Activated T-helper 1 cell treated with anti-CD3 and anti-CD28 coated beads, Interleukin-12 subunit alpha, Interleukin-12 subunit beta, Interleukin-2, Interleukin-4 antibody, amounts not matched to agents 30 ng/mL and 10 ng/mL and 1 ng/mL, durations not matched to agents 14 hours and 24 hours and 36 hours (primary cell): ENCODE measurements at regions of chr4 and their contacts with region 1.

Region 1: GRCh38 chr4:83548151-83548905 is 12.4 kb downstream of the GPAT3 start:
- DNase-seq: peak; percentile 50
- H3K4me3 Mint-ChIP-seq: no peak overlapping the region
- H3K27ac Mint-ChIP-seq: peak overlapping the region; percentile 31
- H3K4me1 Mint-ChIP-seq: peaks cover 31% of the 10 kb centered on the region
- H3K27me3 Mint-ChIP-seq: no peaks in the 10 kb centered on the region

Region 2: GRCh38 chr4:82798168-82799005 is 749.9 kb before region 1 on chr4 and contains the start of gene SCD5:
- intact Hi-C with region 1: loop called (anchors 5 kb)
- DNase-seq: peak; percentile 24
- H3K4me3 Mint-ChIP-seq: peak within 1 kb of the TSS; percentile 79
- H3K27ac Mint-ChIP-seq: no peak within 1 kb of the TSS
- H3K4me1 Mint-ChIP-seq: peaks cover 10% of the 10 kb centered on the region
- H3K27me3 Mint-ChIP-seq: peaks cover 69% of the 10 kb centered on the region
- total RNA-seq, gene SCD5: 0.44 and 0.70 TPM in 2 replicates

Region 3: GRCh38 chr4:83516042-83516772 is 32.1 kb before region 1 on chr4:
- intact Hi-C with region 1: no loop called
- DNase-seq: no peak
- H3K4me3 Mint-ChIP-seq: no peak overlapping the region
- H3K27ac Mint-ChIP-seq: no peak overlapping the region
- H3K4me1 Mint-ChIP-seq: no peaks in the 10 kb centered on the region
- H3K27me3 Mint-ChIP-seq: peaks cover 4% of the 10 kb centered on the region

Region 4: DNA sequence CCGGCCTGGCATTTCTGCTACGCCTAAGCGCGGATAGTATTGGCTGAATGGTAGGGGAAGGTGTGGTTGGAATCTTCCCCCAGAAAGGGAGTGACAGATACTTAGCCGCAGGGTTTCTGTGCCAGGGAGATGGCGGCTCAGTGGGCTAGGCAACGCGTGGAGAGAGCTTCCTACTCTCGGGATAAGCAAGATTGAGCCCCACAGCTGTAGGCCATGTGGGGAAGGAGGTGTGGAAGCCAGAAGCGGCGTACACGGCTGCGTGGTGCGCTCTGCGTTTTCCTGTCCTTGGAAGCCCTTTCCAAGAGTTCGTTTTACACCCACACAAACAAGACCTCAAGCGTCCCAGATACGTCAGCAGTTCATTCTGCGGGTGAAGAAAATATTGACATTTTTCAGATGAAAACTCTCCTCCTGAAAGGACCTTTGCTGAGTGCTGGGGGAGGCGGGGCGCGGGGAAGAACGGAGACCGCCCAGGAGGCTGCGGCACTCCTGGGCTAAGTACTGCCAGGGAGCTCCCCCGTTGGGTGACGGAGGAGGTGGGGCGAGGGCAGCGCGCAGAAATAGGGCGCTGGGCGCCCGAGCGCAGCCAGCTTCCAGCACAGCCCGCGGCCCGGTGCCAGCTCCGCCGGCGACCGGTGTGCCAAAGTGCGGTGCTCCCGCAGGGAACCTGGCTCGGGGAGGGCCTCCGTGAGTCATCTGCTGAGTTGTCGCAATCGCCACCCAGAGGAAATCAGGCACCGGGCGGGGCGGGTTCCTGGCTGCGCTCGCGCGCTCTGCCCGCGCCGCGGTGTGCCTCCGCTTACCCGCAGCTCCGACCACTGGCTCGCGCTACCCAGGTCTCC is 12.6 kb before region 1 on chr4 and contains the start of gene GPAT3:
- intact Hi-C with region 1: loop called (anchors 1 kb)
- DNase-seq: peak; percentile 55
- H3K4me3 Mint-ChIP-seq: peak within 1 kb of the TSS; percentile 83
- H3K27ac Mint-ChIP-seq: peak within 1 kb of the TSS; percentile 12
- H3K4me1 Mint-ChIP-seq: peaks cover 21% of the 10 kb centered on the region
- H3K27me3 Mint-ChIP-seq: peaks cover 47% of the 10 kb centered on the region
- total RNA-seq, gene GPAT3: 5.7 and 6.6 TPM in 2 replicates

Region 5: GRCh38 chr4:83558680-83559079 is 10.4 kb after region 1 on chr4:
- intact Hi-C with region 1: loop called (anchors 1 kb)
- DNase-seq: no peak
- H3K4me3 Mint-ChIP-seq: peak overlapping the region; percentile 29
- H3K27ac Mint-ChIP-seq: peak overlapping the region; percentile 46
- H3K4me1 Mint-ChIP-seq: peaks cover 24% of the 10 kb centered on the region
- H3K27me3 Mint-ChIP-seq: peaks cover 3% of the 10 kb centered on the region

Region 6: GRCh38 chr4:84338380-84338779 is 790.1 kb after region 1 on chr4:
- intact Hi-C with region 1: no loop called
- DNase-seq: no peak
- H3K4me3 Mint-ChIP-seq: no peak overlapping the region
- H3K27ac Mint-ChIP-seq: no peak overlapping the region
- H3K4me1 Mint-ChIP-seq: no peaks in the 10 kb centered on the region
- H3K27me3 Mint-ChIP-seq: no peaks in the 10 kb centered on the region